CD4-positive, alpha-beta T cell (primary cell): ENCODE measurements at regions of chr1 and their contacts with region 1.

Region 1: GRCh38 chr1:92831762-92832536 is at the start of gene RPL5:
- DNase-seq: peak; percentile 94 to 99 (median 96)
- ATAC-seq: peak; percentile 81
- H3K4me3 ChIP-seq: peak within 1 kb of the TSS; percentile 68
- H3K4me3 Mint-ChIP-seq: peak within 1 kb of the TSS; percentile 96
- H3K27ac ChIP-seq: peak within 1 kb of the TSS; percentile 85 to 92
- H3K27ac Mint-ChIP-seq: peak within 1 kb of the TSS; percentile 97
- H3K4me1 ChIP-seq: peaks cover 31% of the 10 kb centered on the region
- H3K4me1 Mint-ChIP-seq: peaks cover 54% of the 10 kb centered on the region
- H3K27me3 ChIP-seq: no peaks in the 10 kb centered on the region
- H3K27me3 Mint-ChIP-seq: no peaks in the 10 kb centered on the region
- CTCF ChIP-seq: peak; percentile 97
- total RNA-seq, gene RPL5: 1,712 to 1,770 TPM

Region 2: GRCh38 chr1:91021686-91022517 is 1810.0 kb before region 1 on chr1 and contains the start of gene ZNF644:
- CTCF ChIA-PET with region 1: no interaction called
- POLR2A ChIA-PET with region 1: interaction called, 3 read pairs
- intact Hi-C with region 1: loop called in 1 of 2 experiments (anchors 10 kb)
- DNase-seq: peak; percentile 79 to 97 (median 84)
- ATAC-seq: peak; percentile 83
- H3K4me3 ChIP-seq: peak within 1 kb of the TSS; percentile 90
- H3K4me3 Mint-ChIP-seq: peak within 1 kb of the TSS; percentile 87
- H3K27ac ChIP-seq: peak within 1 kb of the TSS; percentile 99 to 100
- H3K27ac Mint-ChIP-seq: peak within 1 kb of the TSS; percentile 91
- H3K4me1 ChIP-seq: peaks cover 34% of the 10 kb centered on the region
- H3K4me1 Mint-ChIP-seq: peaks cover 77% of the 10 kb centered on the region
- H3K27me3 ChIP-seq: no peaks in the 10 kb centered on the region
- H3K27me3 Mint-ChIP-seq: no peaks in the 10 kb centered on the region
- CTCF ChIP-seq: no peak
- total RNA-seq, gene ZNF644: 93.3 to 101 TPM

Region 3: GRCh38 chr1:92298573-92299476 is 533.1 kb before region 1 on chr1 and contains the starts of genes GLMN and RPAP2:
- CTCF ChIA-PET with region 1: no interaction called
- POLR2A ChIA-PET with region 1: interaction called, 5 read pairs
- intact Hi-C with region 1: loop called in 1 of 2 experiments (anchors 10 kb)
- DNase-seq: peak; percentile 40 to 89 (median 60)
- ATAC-seq: peak; percentile 96
- H3K4me3 ChIP-seq: peak within 1 kb of the TSS; percentile 98
- H3K4me3 Mint-ChIP-seq: peak within 1 kb of the TSS; percentile 100
- H3K27ac ChIP-seq: peak within 1 kb of the TSS; percentile 86 to 93
- H3K27ac Mint-ChIP-seq: peak within 1 kb of the TSS; percentile 96
- H3K4me1 ChIP-seq: peaks cover 12% of the 10 kb centered on the region
- H3K4me1 Mint-ChIP-seq: peaks cover 54% of the 10 kb centered on the region
- H3K27me3 ChIP-seq: no peaks in the 10 kb centered on the region
- H3K27me3 Mint-ChIP-seq: no peaks in the 10 kb centered on the region
- CTCF ChIP-seq: no peak
- total RNA-seq, gene GLMN: 7.7 to 11.7 TPM
- total RNA-seq, gene RPAP2: 23.4 to 26.5 TPM

Region 4: GRCh38 chr1:92858564-92859399 is 26.8 kb after region 1 on chr1:
- CTCF ChIA-PET with region 1: interaction called, 19 read pairs
- POLR2A ChIA-PET with region 1: interaction called, 3 read pairs
- intact Hi-C with region 1: no loop called
- DNase-seq: peak in 10 of 14 experiments; percentile 22 to 88 (median 44)
- ATAC-seq: peak; percentile 96
- H3K4me3 ChIP-seq: peak overlapping the region; percentile 34
- H3K4me3 Mint-ChIP-seq: peak overlapping the region; percentile 52
- H3K27ac ChIP-seq: peak overlapping the region in 1 of 2 donors; percentile 1
- H3K27ac Mint-ChIP-seq: peak overlapping the region; percentile 72
- H3K4me1 ChIP-seq: peaks cover 12% of the 10 kb centered on the region
- H3K4me1 Mint-ChIP-seq: peaks cover 14% of the 10 kb centered on the region
- H3K27me3 ChIP-seq: no peaks in the 10 kb centered on the region
- H3K27me3 Mint-ChIP-seq: no peaks in the 10 kb centered on the region
- CTCF ChIP-seq: peak; percentile 99

Region 5: GRCh38 chr1:93179886-93180722 is 348.2 kb after region 1 on chr1 and contains the start of gene TMED5:
- CTCF ChIA-PET with region 1: interaction called, 4 read pairs
- POLR2A ChIA-PET with region 1: no interaction called
- intact Hi-C with region 1: loop called in 1 of 2 experiments (anchors 5 kb)
- DNase-seq: peak; percentile 88 to 99 (median 94)
- ATAC-seq: peak; percentile 78
- H3K4me3 ChIP-seq: peak within 1 kb of the TSS; percentile 91
- H3K4me3 Mint-ChIP-seq: peak within 1 kb of the TSS; percentile 93
- H3K27ac ChIP-seq: peak within 1 kb of the TSS; percentile 97 to 98
- H3K27ac Mint-ChIP-seq: peak within 1 kb of the TSS; percentile 95
- H3K4me1 ChIP-seq: peaks cover 25% of the 10 kb centered on the region
- H3K4me1 Mint-ChIP-seq: peaks cover 52% of the 10 kb centered on the region
- H3K27me3 ChIP-seq: no peaks in the 10 kb centered on the region
- H3K27me3 Mint-ChIP-seq: no peaks in the 10 kb centered on the region
- CTCF ChIP-seq: peak; percentile 14
- total RNA-seq, gene TMED5: 42.3 to 43.2 TPM

Region 6: DNA sequence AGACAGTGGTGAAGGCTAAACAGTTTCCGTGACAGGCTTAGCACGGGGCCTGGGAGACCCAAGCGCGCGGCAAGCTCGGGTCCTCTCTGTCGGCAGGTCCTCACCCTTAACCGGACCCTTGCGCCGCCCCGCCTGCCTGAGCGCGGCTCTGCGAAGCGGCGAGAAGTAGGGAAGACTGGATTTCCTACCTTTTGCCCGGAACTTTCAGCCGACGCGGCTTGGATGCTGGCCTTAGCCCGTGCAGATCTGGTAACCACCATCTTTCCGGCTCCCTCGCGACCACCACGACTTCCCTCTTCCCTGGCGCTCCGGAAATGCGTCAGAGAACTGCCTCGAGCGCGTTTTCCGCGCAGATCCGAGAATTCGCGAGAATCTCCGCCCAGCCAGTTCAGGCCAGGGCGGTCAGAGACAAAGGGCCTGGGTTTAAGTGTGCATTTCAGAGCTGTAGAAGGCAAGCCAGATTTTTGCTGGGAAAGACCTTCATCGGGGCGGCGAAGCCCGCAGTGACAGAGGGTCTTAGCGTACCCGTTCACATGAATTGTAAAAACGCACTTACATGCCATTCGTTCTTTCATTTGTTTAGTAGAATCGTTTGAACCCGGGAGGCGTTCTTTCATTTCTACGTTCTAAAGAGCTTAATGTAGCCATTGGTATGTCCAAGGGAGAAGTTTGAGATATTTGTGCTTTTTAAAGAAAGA is 1047.1 kb after region 1 on chr1 and contains the start of gene DNTTIP2:
- CTCF ChIA-PET with region 1: no interaction called
- POLR2A ChIA-PET with region 1: interaction called, 5 read pairs
- intact Hi-C with region 1: loop called in 1 of 2 experiments (anchors 10 kb)
- DNase-seq: peak; percentile 78 to 93 (median 82)
- ATAC-seq: peak; percentile 82
- H3K4me3 ChIP-seq: peak within 1 kb of the TSS; percentile 91
- H3K4me3 Mint-ChIP-seq: peak within 1 kb of the TSS; percentile 100
- H3K27ac ChIP-seq: peak within 1 kb of the TSS; percentile 85 to 94
- H3K27ac Mint-ChIP-seq: peak within 1 kb of the TSS; percentile 98
- H3K4me1 ChIP-seq: peaks cover 26% of the 10 kb centered on the region
- H3K4me1 Mint-ChIP-seq: peaks cover 45% of the 10 kb centered on the region
- H3K27me3 ChIP-seq: no peaks in the 10 kb centered on the region
- H3K27me3 Mint-ChIP-seq: no peaks in the 10 kb centered on the region
- CTCF ChIP-seq: no peak
- total RNA-seq, gene DNTTIP2: 110 to 120 TPM